Activated naive CD4-positive, alpha-beta T cell treated with anti-CD3 and anti-CD28 coated beads, Interleukin-2, amount 10 ng/mL, durations not matched to agents 7 days and 5 days (primary cell): ENCODE measurements at regions of chr10 and their contacts with region 1.

Region 1: DNA sequence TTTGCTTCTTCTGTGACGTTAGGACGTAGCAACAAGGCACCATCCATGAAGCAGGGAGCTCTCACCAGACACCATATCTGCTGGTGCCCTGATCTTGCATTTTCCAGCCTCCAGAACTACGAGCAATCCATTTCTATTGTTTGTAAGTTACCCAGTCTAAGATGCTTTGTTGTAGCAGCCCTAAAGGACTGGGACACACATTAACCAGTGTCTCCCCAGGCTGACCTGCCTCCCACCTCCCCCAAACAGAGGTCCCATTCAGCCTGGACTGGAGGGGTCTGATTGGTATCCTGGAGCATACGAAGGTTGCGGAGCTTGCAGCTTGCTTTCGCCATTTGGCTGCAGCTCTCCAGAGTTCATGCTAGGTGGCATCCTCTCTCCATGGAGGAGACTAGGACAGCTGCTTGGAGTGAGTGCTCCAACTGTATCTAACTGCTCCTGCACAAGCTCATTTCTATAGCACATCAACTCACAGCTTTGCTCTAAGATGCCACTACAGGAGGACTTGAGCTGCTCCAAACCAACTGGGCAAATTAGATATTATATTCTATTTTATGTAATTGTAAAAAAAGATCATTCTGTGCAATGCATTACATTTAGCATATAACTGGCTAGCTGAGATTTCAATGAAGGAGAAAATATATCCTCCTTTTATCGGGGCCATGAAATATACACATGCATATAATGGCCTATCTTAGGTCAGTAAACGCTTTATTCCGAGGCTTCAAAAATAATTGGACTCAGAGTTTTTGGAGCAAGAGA is 8.0 kb upstream of the GRK5 start:
- DNase-seq: peak; percentile 70
- H3K4me3 Mint-ChIP-seq: no peak overlapping the region
- H3K27ac Mint-ChIP-seq: no peak overlapping the region
- H3K4me1 Mint-ChIP-seq: peaks cover 12% of the 10 kb centered on the region
- H3K27me3 Mint-ChIP-seq: peaks cover 12% of the 10 kb centered on the region

Region 2: DNA sequence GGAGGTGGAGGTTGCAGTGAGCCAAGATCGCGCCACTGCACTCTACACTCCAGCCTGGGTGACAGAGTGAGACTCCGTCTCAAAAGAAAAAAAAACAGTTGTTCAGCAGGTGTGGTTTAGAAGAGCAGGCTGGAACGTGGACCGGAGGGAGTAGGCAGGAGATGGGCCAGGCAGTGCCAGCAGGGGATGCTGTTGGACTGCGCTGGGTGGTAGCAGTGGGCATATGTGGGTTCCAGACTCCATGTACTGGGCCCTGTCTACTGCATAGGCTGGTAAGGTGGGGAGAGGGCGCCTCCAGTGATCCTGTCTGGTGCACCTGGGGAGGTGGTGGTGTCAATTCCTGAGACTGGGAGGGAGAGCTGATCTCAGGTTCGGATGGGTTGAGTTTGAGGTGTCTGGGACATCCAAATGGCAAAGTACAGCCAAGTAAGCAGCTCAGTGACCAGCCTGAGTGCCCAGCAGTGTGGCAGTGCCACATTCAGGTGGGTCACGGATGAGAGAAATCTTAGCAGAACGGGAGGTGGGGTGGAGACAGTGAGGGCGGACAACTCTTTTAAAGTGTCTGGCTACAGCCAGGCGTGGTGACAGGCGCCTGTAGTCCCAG is 59.8 kb before region 1 on chr10:
- CTCF ChIA-PET with region 1: interaction called, 28 read pairs
- DNase-seq: peak; percentile 75
- H3K4me3 Mint-ChIP-seq: no peak overlapping the region
- H3K27ac Mint-ChIP-seq: peak overlapping the region; percentile 84
- H3K4me1 Mint-ChIP-seq: peaks cover 32% of the 10 kb centered on the region
- H3K27me3 Mint-ChIP-seq: no peaks in the 10 kb centered on the region

Region 3: GRCh38 chr10:119305860-119306513 is 106.6 kb after region 1 on chr10:
- CTCF ChIA-PET with region 1: interaction called, 13 read pairs
- DNase-seq: peak; percentile 86
- H3K4me3 Mint-ChIP-seq: peak overlapping the region; percentile 72
- H3K27ac Mint-ChIP-seq: peak overlapping the region; percentile 99
- H3K4me1 Mint-ChIP-seq: peaks cover 80% of the 10 kb centered on the region
- H3K27me3 Mint-ChIP-seq: peaks cover 28% of the 10 kb centered on the region

Region 4: DNA sequence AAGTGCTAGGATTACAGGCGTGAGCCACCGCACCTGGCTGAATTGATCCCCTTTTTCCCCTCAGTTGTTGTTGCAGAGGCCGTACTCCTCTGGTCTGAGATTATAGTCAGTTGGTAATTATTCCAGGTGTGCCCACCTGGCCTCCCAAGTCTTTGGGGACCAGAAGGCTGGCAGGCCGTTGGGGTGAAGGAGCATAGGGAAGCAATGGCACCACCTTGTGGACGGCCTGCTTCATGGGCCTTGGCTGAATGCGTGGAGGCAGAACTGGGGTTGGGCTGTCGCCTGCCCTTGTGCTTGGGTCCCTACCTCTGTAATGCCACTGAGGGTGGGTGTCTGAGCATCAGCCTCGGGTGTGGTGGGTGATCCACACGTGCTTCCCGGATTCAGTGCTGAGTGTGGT is 217.4 kb after region 1 on chr10:
- CTCF ChIA-PET with region 1: interaction called, 96 read pairs
- DNase-seq: peak; percentile 82
- H3K4me3 Mint-ChIP-seq: no peak overlapping the region
- H3K27ac Mint-ChIP-seq: no peak overlapping the region
- H3K4me1 Mint-ChIP-seq: no peaks in the 10 kb centered on the region
- H3K27me3 Mint-ChIP-seq: no peaks in the 10 kb centered on the region

Region 5: GRCh38 chr10:119445311-119445934 is 246.0 kb after region 1 on chr10:
- CTCF ChIA-PET with region 1: interaction called, 95 read pairs
- DNase-seq: peak; percentile 89
- H3K4me3 Mint-ChIP-seq: no peak overlapping the region
- H3K27ac Mint-ChIP-seq: peak overlapping the region; percentile 43
- H3K4me1 Mint-ChIP-seq: peaks cover 14% of the 10 kb centered on the region
- H3K27me3 Mint-ChIP-seq: no peaks in the 10 kb centered on the region

Region 6: DNA sequence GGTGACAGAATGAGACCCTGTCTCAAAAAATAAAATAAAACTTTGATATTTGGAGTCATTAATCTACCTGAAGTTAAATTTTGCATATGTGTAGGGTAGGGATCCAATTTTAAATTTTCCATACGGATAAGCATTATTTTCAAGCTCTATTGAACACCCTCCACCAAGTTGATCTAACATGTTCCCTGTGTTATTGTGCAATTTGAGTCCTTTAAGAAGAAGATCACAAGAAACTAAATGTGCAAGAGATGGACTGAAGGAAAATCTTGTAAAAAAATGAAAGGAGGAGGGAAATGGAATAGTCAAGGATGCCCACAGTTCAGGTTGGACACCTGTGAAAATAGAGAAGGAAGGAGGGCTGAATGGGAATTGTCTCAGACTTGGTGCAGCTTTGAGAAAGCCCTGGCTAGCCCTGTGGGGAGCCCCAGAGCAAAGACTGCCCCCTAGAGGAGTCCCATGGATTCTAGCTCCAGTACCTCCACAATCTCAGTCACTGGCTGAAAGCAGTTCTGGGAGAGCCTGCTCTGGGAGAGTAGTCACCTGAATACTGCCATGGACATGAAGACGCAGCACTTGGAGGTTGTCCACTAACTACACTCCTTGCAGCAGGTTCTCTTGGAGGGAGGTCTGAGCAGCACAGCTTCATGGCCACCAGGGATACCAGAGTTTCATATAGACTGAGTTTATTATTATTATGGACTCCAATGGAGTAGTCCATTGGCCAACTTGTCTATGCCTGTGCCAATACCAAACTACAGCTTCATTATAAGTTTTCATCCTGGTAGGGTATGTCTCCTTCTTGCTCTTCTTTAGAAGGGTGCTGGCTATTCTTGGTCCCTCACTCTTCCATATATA is 403.1 kb after region 1 on chr10:
- CTCF ChIA-PET with region 1: interaction called, 17 read pairs
- DNase-seq: peak; percentile 68
- H3K4me3 Mint-ChIP-seq: no peak overlapping the region
- H3K27ac Mint-ChIP-seq: no peak overlapping the region
- H3K4me1 Mint-ChIP-seq: peaks cover 11% of the 10 kb centered on the region
- H3K27me3 Mint-ChIP-seq: no peaks in the 10 kb centered on the region